PC-9 (cell line): ENCODE measurements at regions of chr7 and their contacts with region 1.

Region 1: DNA sequence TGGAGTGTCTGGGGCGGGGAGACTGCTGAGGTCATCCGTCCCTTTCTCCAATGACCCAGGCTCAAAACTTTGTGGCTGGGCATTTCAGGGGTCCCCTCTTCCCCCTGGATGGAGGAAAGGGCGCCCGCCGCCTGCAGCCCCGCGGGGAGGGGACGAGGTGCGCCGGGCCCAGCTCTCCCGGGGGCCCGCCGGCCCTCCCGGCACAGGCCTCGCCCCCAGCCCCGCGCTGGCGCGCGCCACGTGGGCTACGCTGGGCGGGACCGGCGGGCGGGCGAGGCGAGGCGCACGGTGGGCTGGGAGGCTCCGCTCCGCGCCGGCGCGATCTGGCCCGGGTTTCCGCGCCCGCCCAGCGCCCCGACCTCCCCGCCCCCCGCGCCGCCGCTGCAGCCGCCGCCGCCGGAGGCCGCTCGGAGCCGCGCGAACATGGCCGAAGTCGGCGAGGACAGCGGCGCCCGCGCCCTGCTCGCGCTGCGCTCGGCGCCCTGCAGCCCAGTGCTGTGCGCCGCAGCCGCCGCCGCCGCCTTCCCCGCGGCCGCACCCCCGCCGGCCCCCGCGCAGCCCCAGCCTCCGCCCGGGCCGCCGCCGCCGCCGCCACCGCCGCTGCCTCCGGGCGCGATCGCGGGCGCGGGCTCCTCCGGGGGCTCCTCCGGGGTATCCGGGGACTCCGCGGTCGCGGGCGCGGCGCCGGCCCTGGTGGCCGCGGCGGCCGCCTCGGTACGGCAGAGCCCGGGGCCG is at the start of gene FOXK1:
- DNase-seq: peak in 1 of 2 experiments; percentile 84
- H3K4me3 ChIP-seq: peak within 1 kb of the TSS; percentile 66
- H3K27ac ChIP-seq: peak within 1 kb of the TSS; percentile 85
- H3K4me1 ChIP-seq: peaks cover 21% of the 10 kb centered on the region
- H3K27me3 ChIP-seq: no peaks in the 10 kb centered on the region
- CTCF ChIP-seq: no peak
- total RNA-seq, gene FOXK1: 68.1 and 77.3 TPM in 2 replicates

Region 2: GRCh38 chr7:4610768-4611467 is 71.1 kb before region 1 on chr7:
- CTCF ChIA-PET with region 1: no interaction called
- POLR2A ChIA-PET with region 1: no interaction called
- intact Hi-C with region 1: loop called (anchors 2 kb)
- DNase-seq: peak; percentile 66 to 71
- H3K4me3 ChIP-seq: no peak overlapping the region
- H3K27ac ChIP-seq: no peak overlapping the region
- H3K4me1 ChIP-seq: no peaks in the 10 kb centered on the region
- H3K27me3 ChIP-seq: peaks cover 36% of the 10 kb centered on the region
- CTCF ChIP-seq: peak; percentile 91

Region 3: DNA sequence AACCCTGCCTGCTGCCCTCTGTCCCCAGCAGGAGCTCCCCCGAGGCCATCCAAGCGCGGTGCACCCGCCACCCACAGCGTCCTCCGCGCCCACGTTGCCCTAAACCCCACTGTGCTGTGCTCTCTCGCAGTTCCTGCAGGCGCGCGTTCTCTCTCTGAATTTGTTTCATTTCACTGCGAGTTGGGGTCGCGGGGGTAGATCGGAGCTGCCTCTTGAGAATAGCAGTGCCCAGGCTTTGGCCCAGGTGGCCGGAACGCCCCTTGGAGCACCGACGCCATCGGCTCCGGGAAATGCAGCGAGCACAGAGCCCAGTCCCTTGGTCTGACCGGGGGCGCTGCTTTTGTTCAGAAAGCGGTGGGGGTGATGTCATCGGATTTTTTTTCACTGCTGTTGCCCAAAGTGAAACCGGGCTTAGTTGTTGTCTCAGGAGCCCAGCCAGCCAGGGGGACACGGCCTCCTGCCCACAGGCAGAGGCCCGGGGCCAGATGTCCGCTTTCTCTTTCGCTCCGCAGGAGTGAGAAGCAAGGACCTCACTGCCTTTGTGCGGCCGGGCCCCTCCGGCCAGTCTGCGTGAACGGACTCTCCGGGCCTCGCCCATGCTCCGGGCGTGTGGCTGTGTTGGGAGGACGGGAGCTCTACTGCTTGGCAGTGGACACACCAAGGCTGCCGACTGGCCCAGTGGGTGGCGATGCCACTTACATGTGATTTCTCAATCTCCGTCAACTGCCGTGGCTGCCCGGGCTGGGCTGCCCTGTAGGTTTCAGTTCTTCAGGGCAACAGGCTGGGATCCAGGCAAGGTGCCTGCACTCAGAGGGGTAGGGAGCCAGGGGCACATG is 43.2 kb after region 1 on chr7:
- CTCF ChIA-PET with region 1: no interaction called
- POLR2A ChIA-PET with region 1: no interaction called
- intact Hi-C with region 1: loop called (anchors 1 kb)
- DNase-seq: peak; percentile 72 to 88
- H3K4me3 ChIP-seq: peak overlapping the region; percentile 42; the same call in 1 of the 2 replicates
- H3K27ac ChIP-seq: peak overlapping the region; percentile 50
- H3K4me1 ChIP-seq: 0 out of 2 replicates have a peak, but pooled peaks cover 5% of the 10 kb centered on the region
- H3K27me3 ChIP-seq: no peaks in the 10 kb centered on the region
- CTCF ChIP-seq: no peak

Region 4: GRCh38 chr7:4753711-4754432 is 71.8 kb after region 1 on chr7:
- CTCF ChIA-PET with region 1: interaction called, 4 read pairs
- POLR2A ChIA-PET with region 1: no interaction called
- intact Hi-C with region 1: loop called (anchors 1 kb)
- DNase-seq: peak; percentile 53 to 89
- H3K4me3 ChIP-seq: no peak overlapping the region
- H3K27ac ChIP-seq: no peak overlapping the region
- H3K4me1 ChIP-seq: no peaks in the 10 kb centered on the region
- H3K27me3 ChIP-seq: no peaks in the 10 kb centered on the region
- CTCF ChIP-seq: peak; percentile 96